Naive thymus-derived CD4-positive, alpha-beta T cell (primary cell): ENCODE measurements at regions of chr21 and their contacts with region 1.

Region 1: DNA sequence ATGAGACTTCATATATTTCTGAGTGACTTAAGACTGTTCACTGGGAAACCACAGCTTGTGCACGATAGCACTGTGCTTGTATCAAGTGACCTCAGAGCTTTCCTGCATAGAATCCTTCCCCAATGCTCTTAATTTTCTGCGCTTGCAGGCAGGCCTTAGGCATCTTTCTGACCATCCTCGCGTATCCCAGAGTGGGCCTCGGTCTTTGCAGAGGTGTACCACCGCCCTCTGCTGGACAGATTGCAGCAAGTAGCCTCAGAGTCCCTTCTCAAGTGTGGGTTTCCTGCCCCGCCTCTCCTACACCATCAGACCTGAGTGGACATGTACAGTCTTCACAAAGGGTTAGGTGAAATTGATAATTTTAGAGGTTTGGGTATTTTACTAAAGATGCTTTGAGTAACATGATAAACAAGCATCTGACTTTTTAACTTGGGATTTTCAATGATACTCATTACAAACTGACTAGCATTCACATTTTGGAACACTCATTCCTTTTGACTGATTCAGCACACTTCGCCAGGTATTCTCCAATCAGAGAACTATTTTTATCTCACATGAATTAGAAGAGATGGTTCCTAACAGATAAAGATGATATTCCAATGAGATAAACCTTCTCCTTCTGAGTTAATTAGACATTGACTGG is 246.5 kb upstream of the USP25 start:
- DNase-seq: peak; percentile 33 to 75 (median 69)
- ATAC-seq: peak; percentile 99
- H3K4me3 ChIP-seq: no peak overlapping the region
- H3K4me3 Mint-ChIP-seq: peak overlapping the region in 6 of 10 donors; percentile 18 to 59 (median 37)
- H3K27ac ChIP-seq: no peak overlapping the region
- H3K27ac Mint-ChIP-seq: peak overlapping the region in 2 of 9 donors; percentile 2 to 57
- H3K4me1 ChIP-seq: no peaks in the 10 kb centered on the region
- H3K4me1 Mint-ChIP-seq: peaks cover 3 to 37% (median 25%) of the 10 kb centered on the region in 7 donors
- H3K27me3 ChIP-seq: no peaks in the 10 kb centered on the region
- H3K27me3 Mint-ChIP-seq: peaks cover 0 to 3% (median 0%) of the 10 kb centered on the region in 5 donors

Region 2: DNA sequence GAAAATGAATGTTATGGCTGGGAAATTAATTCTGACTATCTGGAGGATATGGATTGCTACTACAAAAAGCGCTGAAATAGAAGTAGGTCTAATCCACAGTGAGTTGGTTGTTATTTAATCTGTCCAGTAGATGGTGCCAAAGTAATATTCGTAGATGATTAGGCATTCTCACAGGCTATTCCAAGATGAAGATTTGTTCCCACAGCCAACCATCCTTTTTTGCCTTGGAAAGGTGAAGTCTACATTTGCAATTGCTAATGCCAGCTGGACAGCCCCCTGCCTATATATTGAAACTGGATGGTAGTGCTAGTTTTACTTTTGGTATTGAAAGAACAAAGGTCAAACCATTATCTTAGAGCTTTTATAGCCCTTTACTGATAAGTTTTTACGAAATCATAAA is 1223.5 kb before region 1 on chr21:
- CTCF ChIA-PET with region 1: no interaction called
- POLR2A ChIA-PET with region 1: no interaction called
- intact Hi-C with region 1: loop called in 1 of 2 experiments (anchors 2 kb)
- DNase-seq: peak in 5 of 9 donors; percentile 13 to 28 (median 23)
- ATAC-seq: peak; percentile 59
- H3K4me3 ChIP-seq: no peak overlapping the region
- H3K4me3 Mint-ChIP-seq: no peak overlapping the region
- H3K27ac ChIP-seq: no peak overlapping the region
- H3K27ac Mint-ChIP-seq: no peak overlapping the region
- H3K4me1 ChIP-seq: no peaks in the 10 kb centered on the region
- H3K4me1 Mint-ChIP-seq: no peaks in the 10 kb centered on the region
- H3K27me3 ChIP-seq: no peaks in the 10 kb centered on the region
- H3K27me3 Mint-ChIP-seq: peaks cover 2 to 19% (median 12%) of the 10 kb centered on the region in 5 donors

Region 3: DNA sequence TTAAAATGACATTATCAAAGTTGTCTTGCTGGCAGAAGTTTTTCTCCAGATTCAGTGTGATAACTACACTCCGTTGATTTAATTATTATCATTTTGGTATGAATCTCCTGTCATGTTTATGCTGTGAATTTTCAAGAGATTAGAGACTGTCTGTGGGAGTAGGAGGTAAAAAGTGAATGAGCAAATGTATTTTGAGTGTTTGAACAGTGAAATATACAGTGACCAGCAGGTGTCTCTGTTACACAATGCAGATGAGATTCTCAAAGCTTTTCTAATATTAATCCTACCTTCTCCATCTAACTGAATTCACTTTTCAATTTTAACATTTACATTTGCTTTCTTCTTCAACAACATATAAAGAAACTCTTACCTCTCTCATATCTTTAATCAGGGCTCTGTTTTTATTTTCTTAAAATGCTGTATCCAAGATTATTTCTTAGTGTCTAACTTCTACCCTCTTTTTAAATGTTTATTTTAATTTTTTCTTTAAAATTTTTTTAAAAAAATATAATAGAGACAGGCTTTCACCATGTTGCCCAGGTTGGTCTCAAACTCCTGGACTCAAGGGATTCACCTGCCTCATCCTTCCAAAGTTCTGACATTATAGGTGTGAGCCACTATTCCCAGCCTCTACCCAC is 1079.5 kb before region 1 on chr21:
- CTCF ChIA-PET with region 1: no interaction called
- POLR2A ChIA-PET with region 1: no interaction called
- intact Hi-C with region 1: loop called (anchors 1 kb)
- DNase-seq: peak in 5 of 9 donors; percentile 19 to 55 (median 39)
- ATAC-seq: peak; percentile 79
- H3K4me3 ChIP-seq: no peak overlapping the region
- H3K4me3 Mint-ChIP-seq: no peak overlapping the region
- H3K27ac ChIP-seq: no peak overlapping the region
- H3K27ac Mint-ChIP-seq: no peak overlapping the region
- H3K4me1 ChIP-seq: no peaks in the 10 kb centered on the region
- H3K4me1 Mint-ChIP-seq: no peaks in the 10 kb centered on the region
- H3K27me3 ChIP-seq: no peaks in the 10 kb centered on the region
- H3K27me3 Mint-ChIP-seq: peaks cover 0 to 1% (median 0%) of the 10 kb centered on the region in 5 donors

Region 4: GRCh38 chr21:14880922-14881321 is 602.3 kb before region 1 on chr21:
- CTCF ChIA-PET with region 1: no interaction called
- POLR2A ChIA-PET with region 1: no interaction called
- intact Hi-C with region 1: loop called in 1 of 2 experiments (anchors 5 kb)
- DNase-seq: no peak
- ATAC-seq: no peak
- H3K4me3 ChIP-seq: no peak overlapping the region
- H3K4me3 Mint-ChIP-seq: no peak overlapping the region
- H3K27ac ChIP-seq: no peak overlapping the region
- H3K27ac Mint-ChIP-seq: no peak overlapping the region
- H3K4me1 ChIP-seq: no peaks in the 10 kb centered on the region
- H3K4me1 Mint-ChIP-seq: peaks cover 0 to 4% (median 0%) of the 10 kb centered on the region in 7 donors
- H3K27me3 ChIP-seq: no peaks in the 10 kb centered on the region
- H3K27me3 Mint-ChIP-seq: peaks cover 0 to 4% (median 0%) of the 10 kb centered on the region in 5 donors

Region 5: GRCh38 chr21:15552914-15553494 is 69.7 kb after region 1 on chr21:
- CTCF ChIA-PET with region 1: interaction called, 25 read pairs
- POLR2A ChIA-PET with region 1: interaction called, 3 read pairs
- intact Hi-C with region 1: loop called (anchors 1 to 5 kb)
- DNase-seq: peak in 6 of 9 donors; percentile 13 to 62 (median 48)
- ATAC-seq: peak; percentile 64
- H3K4me3 ChIP-seq: no peak overlapping the region
- H3K4me3 Mint-ChIP-seq: peak overlapping the region in 5 of 10 donors; percentile 25 to 56 (median 33)
- H3K27ac ChIP-seq: no peak overlapping the region
- H3K27ac Mint-ChIP-seq: peak overlapping the region in 5 of 9 donors; percentile 4 to 70 (median 16)
- H3K4me1 ChIP-seq: peaks cover 0 to 9% of the 10 kb centered on the region in 2 donors
- H3K4me1 Mint-ChIP-seq: peaks cover 4 to 23% (median 18%) of the 10 kb centered on the region in 7 donors
- H3K27me3 ChIP-seq: no peaks in the 10 kb centered on the region
- H3K27me3 Mint-ChIP-seq: peaks cover 0 to 4% (median 0%) of the 10 kb centered on the region in 5 donors